ENCODE measurements at regions of chr14 and their contacts with region 1.

Region 1: GRCh38 chr14:91911474-91912032 is 35.9 kb downstream of the FBLN5 start:
- DNase-seq: peak; percentile 9 to 73 (median 39)
- ATAC-seq: peak; percentile 83 to 98 (median 94)
- H3K4me3 ChIP-seq: no peak overlapping the region
- H3K4me3 Mint-ChIP-seq: peak overlapping the region in 1 of 3 donors; percentile 18
- H3K27ac ChIP-seq: no peak overlapping the region
- H3K27ac Mint-ChIP-seq: peak overlapping the region; percentile 62 to 88
- H3K4me1 ChIP-seq: peaks cover 2 to 6% of the 10 kb centered on the region in 2 experiments
- H3K4me1 Mint-ChIP-seq: peaks cover 22 to 25% (median 23%) of the 10 kb centered on the region in 3 donors
- H3K27me3 ChIP-seq: peaks cover 0 to 1% of the 10 kb centered on the region in 2 experiments
- H3K27me3 Mint-ChIP-seq: no peaks in the 10 kb centered on the region

Region 2: GRCh38 chr14:91649930-91650329 is 261.6 kb before region 1 on chr14:
- CTCF ChIA-PET with region 1: interaction called, 4 to 10 read pairs
- POLR2A ChIA-PET with region 1: no interaction called
- DNase-seq: peak in 10 of 35 experiments; percentile 2 to 54 (median 8)
- ATAC-seq: no peak
- H3K4me3 ChIP-seq: no peak overlapping the region
- H3K4me3 Mint-ChIP-seq: no peak overlapping the region
- H3K27ac ChIP-seq: no peak overlapping the region
- H3K27ac Mint-ChIP-seq: no peak overlapping the region
- H3K4me1 ChIP-seq: no peaks in the 10 kb centered on the region
- H3K4me1 Mint-ChIP-seq: peaks cover 3 to 14% (median 3%) of the 10 kb centered on the region in 3 donors
- H3K27me3 ChIP-seq: peaks cover 0 to 2% of the 10 kb centered on the region in 2 experiments
- H3K27me3 Mint-ChIP-seq: no peaks in the 10 kb centered on the region

Region 3: GRCh38 chr14:91867316-91867988 is 44.1 kb before region 1 on chr14 and contains the start of gene TC2N:
- CTCF ChIA-PET with region 1: interaction called, 4 to 13 read pairs
- POLR2A ChIA-PET with region 1: interaction called, 3 to 5 read pairs
- DNase-seq: peak in 34 of 35 experiments; percentile 31 to 78 (median 56)
- ATAC-seq: peak; percentile 50 to 62 (median 54)
- H3K4me3 ChIP-seq: peak within 1 kb of the TSS; percentile 67 to 83
- H3K4me3 Mint-ChIP-seq: peak within 1 kb of the TSS; percentile 86 to 97 (median 97)
- H3K27ac ChIP-seq: peak within 1 kb of the TSS; percentile 90
- H3K27ac Mint-ChIP-seq: peak within 1 kb of the TSS; percentile 100
- H3K4me1 ChIP-seq: peaks cover 64 to 80% of the 10 kb centered on the region in 2 experiments
- H3K4me1 Mint-ChIP-seq: peaks cover 83 to 88% (median 85%) of the 10 kb centered on the region in 3 donors
- H3K27me3 ChIP-seq: no peaks in the 10 kb centered on the region
- H3K27me3 Mint-ChIP-seq: no peaks in the 10 kb centered on the region
- total RNA-seq, gene TC2N: 203 to 274 (median 243) TPM

Region 4: GRCh38 chr14:92495035-92495434 is 583.5 kb after region 1 on chr14:
- CTCF ChIA-PET with region 1: no interaction called
- POLR2A ChIA-PET with region 1: no interaction called
- DNase-seq: peak in 1 of 35 experiments; percentile 25
- ATAC-seq: no peak
- H3K4me3 ChIP-seq: no peak overlapping the region
- H3K4me3 Mint-ChIP-seq: no peak overlapping the region
- H3K27ac ChIP-seq: no peak overlapping the region
- H3K27ac Mint-ChIP-seq: no peak overlapping the region
- H3K4me1 ChIP-seq: peaks cover 0 to 2% of the 10 kb centered on the region in 2 experiments
- H3K4me1 Mint-ChIP-seq: no peaks in the 10 kb centered on the region
- H3K27me3 ChIP-seq: peaks cover 0 to 7% of the 10 kb centered on the region in 2 experiments
- H3K27me3 Mint-ChIP-seq: no peaks in the 10 kb centered on the region

Measured in T-cell (primary cell).